Cardiac septum (tissue), 1 donor: ENCODE measurements at regions of chr4 and their contacts with region 1.

Region 1: DNA sequence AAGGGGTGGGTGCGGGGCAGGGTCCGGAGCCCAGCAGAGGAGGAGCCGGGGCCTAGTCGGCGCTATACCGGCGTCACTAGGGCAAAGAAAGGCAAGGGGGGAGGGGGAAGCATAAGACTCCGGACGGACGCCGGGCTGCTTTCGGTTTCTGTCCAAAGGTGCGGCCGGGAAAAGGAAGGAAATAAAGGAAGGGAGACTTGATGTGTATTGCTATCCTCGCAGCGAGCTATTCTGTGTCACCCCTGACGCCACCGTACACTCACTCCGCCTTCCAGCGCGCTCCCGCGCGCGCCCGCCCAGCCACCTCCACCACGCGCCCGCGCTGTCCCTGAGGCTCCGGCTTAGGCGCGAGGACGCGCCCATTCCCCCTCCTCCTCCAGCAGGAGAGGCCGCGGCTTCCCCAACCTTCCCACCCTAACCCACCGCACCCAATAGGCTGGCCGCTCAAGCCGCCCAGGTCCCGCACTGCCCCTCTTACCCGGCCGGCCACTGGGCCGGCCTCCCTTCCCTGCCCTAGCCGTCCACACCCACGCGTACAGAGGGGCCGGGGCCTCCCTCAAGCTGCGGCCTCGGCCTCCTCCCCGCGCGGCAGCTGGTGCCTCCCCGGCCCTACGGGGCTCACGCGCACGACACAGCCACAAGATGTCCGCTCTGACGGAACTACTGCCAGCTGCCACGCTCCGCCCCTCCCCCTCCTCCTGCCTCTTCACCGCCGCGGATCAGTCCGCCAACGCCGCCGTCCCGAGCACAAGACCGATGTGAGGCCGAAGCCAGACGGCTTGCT is at the start of gene UBE2D3:
- DNase-seq: peak; percentile 96
- total RNA-seq, gene UBE2D3: 239 TPM

Region 2: DNA sequence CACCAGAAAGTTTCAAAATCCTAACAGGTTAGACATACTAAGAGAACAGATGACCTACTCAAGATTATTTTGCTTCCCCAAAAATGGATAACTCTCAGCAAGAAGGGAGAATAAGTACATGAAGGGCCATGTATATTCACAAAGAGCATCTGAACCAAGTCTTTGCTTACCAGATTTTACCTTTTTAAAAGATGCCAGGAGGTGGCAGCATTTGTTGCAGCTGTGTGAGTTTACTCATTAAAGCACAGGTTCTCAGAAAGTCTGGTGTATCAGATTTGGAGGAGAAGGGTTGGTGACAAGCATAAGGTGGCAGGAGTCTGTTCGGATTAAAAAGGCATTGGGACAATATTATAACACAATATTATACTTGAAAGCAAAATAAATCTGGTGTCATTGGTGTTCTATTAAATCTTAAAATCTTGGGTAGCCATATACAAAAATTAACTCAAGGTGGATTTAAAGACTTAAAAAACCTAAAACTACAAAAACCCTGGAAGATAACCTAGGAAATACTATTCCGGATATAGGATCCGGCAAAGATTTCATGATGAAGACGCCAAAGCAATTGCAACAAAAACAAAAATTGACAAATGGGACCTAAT is 377.2 kb before region 1 on chr4:
- intact Hi-C with region 1: loop called (anchors 5 kb)
- DNase-seq: no peak

Region 3: DNA sequence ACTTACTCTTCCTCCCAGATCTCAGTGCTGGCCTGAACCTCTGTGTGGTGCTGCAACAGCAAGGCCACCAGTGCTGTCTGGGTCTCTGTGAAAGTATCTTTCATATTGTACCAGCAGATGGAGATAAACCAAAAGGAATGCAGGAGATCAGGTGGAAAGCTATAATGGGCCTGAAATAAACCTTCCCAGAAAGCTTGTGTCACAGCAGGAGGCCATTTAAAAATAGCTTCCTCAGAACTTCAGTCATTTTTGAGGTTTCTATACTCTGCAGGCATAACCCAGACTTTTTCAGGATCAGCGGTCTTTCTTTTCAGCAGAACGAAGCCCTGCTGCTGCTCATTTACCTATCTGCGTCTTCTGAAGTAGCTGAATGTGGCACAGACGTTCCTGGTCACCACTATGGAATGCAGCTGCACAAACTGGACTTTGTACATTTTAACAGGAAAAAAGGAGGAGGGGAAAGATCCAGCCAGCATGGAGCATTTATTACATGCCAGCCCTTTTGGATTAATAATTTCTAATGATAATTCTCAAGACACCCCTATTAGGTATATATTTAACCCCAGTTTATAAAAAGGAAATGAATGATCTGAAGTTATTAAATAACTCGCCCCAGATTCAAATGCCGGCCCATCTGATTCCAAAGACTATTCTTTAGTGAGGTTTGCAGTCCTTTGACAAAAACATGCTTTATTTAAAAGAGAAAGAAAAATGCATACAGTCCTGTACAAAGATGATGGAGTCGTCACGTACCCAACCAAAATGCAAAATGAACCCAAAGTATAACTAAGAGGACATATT is 206.2 kb before region 1 on chr4:
- intact Hi-C with region 1: loop called (anchors 5 kb)
- DNase-seq: no peak

Region 4: DNA sequence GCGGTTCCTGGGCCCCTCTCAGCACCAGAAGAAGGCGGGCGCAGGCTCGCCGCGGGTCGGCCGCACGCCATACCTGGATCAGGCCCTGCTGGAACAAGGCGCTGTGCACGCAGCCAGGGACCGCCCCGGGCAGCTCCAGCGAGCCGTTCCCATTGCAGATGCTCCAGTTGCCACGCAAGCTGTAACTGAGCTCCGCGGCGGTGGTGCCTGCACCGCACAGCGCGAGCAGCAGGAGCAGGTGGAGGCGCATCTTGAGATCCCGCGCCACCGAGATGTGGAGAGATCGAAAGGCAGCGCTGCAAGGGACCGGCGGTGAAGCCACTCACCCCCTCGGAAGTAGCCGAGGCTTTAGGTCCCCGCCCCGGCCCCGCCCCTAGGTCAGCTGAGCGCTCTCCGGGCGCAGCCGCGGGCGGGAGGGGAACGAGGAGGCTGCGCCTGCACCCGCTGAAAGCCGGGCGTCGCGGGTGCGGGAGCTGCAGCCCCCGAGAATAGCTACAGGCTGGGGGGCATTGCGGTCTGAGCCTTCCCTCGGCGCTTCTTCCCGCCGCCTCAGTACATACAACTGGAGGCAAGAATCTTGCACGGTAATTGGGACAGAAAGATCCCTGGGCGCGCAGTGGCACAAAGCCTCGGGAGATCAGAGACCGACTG is 66.3 kb before region 1 on chr4 and contains the start of gene MANBA:
- intact Hi-C with region 1: loop called (anchors 1 kb)
- DNase-seq: peak; percentile 94
- total RNA-seq, gene MANBA: 29.8 TPM

Region 5: GRCh38 chr4:103019308-103020124 is 192.4 kb after region 1 on chr4 and contains the start of gene SLC9B1:
- intact Hi-C with region 1: loop called (anchors 1 kb)
- DNase-seq: peak; percentile 98
- total RNA-seq, gene SLC9B1: 0.86 TPM